Mammary epithelial cell (primary cell): ENCODE measurements at regions of chr5 and their contacts with region 1.

Region 1: GRCh38 chr5:74640450-74640953 is at the start of gene ENC1:
- DNase-seq: peak; percentile 88
- H3K4me3 ChIP-seq: peak within 1 kb of the TSS; percentile 66 to 98 (median 93)
- H3K27ac ChIP-seq: peak within 1 kb of the TSS; percentile 91
- H3K4me1 ChIP-seq: peaks cover 60% of the 10 kb centered on the region
- H3K27me3 ChIP-seq: no peaks in the 10 kb centered on the region
- CTCF ChIP-seq: peak; percentile 12 to 59
- total RNA-seq, gene ENC1: 42.4 to 392 TPM

Region 2: DNA sequence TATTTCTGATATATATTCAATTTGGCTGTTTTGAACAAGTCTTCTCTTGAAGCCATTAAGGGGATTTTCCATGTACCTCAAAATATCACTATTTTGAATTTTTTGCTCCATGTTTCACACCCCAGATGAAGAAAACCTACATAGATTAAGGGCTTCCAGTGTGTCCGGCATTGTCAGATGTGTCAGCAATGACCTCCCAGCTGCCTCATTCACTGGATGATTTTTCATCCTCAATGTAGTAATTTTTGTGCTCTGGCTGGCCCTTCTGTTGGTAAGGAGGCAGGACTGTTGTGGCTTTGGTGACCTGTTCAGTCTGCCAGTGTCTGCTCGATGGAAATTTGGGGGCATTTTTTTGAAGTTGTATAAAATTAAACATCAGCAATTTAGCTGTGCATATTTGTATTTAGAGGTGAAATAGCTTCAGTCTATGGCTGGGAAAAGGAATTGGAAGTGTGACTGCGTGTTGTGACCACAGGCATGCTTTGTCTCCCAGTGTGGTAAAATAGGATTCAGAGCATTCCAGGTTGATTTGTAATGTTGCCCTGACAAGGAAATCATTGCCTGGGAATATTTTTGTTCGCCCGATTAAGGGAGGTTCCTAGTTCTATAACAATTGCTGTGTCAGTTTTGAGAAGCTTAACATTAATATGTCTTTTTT is 702.1 kb before region 1 on chr5:
- CTCF ChIA-PET with region 1: no interaction called
- dilution Hi-C with region 1: no loop called
- in situ Hi-C with region 1: no loop called
- intact Hi-C with region 1: loop called (anchors 1 kb)
- DNase-seq: peak; percentile 89
- H3K4me3 ChIP-seq: peak overlapping the region in 2 of 3 experiments; percentile 2 to 6
- H3K27ac ChIP-seq: peak overlapping the region; percentile 90
- H3K4me1 ChIP-seq: peaks cover 42% of the 10 kb centered on the region
- H3K27me3 ChIP-seq: no peaks in the 10 kb centered on the region
- CTCF ChIP-seq: no peak

Region 3: DNA sequence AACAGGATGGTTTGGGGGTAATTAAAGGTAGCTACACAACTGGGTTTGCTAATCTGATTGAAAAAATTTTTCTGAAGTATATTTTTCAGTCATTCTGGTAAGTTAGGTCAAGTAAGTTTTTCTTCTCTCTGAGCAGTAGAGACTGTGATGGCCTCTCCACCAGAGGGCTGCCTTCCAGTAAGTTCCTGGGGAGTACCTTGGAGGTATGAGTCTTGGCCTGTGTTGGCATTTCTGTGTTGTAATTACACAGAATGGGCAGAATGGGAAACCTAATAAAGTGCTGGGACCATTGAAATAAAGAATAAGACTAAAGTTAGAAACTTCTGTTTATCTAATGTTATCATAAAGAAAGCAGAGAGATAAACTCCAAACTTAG is 583.7 kb before region 1 on chr5:
- CTCF ChIA-PET with region 1: no interaction called
- dilution Hi-C with region 1: no loop called
- in situ Hi-C with region 1: no loop called
- intact Hi-C with region 1: loop called (anchors 1 kb)
- DNase-seq: peak; percentile 47
- H3K4me3 ChIP-seq: no peak overlapping the region
- H3K27ac ChIP-seq: no peak overlapping the region
- H3K4me1 ChIP-seq: peaks cover 6% of the 10 kb centered on the region
- H3K27me3 ChIP-seq: no peaks in the 10 kb centered on the region
- CTCF ChIP-seq: peak; percentile 49 to 83

Region 4: GRCh38 chr5:74232281-74232680 is 408.2 kb before region 1 on chr5:
- CTCF ChIA-PET with region 1: no interaction called
- dilution Hi-C with region 1: no loop called
- in situ Hi-C with region 1: loop called in 1 of 2 experiments (anchors 25 kb)
- intact Hi-C with region 1: no loop called
- DNase-seq: peak; percentile 99
- H3K4me3 ChIP-seq: no peak overlapping the region
- H3K27ac ChIP-seq: peak overlapping the region; percentile 86
- H3K4me1 ChIP-seq: peaks cover 33% of the 10 kb centered on the region
- H3K27me3 ChIP-seq: no peaks in the 10 kb centered on the region
- CTCF ChIP-seq: no peak

Region 5: GRCh38 chr5:74316064-74316679 is 324.3 kb before region 1 on chr5:
- CTCF ChIA-PET with region 1: interaction called, 5 read pairs
- dilution Hi-C with region 1: no loop called
- in situ Hi-C with region 1: loop called in 1 of 2 experiments (anchors 10 kb)
- intact Hi-C with region 1: loop called (anchors 1 kb)
- DNase-seq: peak; percentile 99
- H3K4me3 ChIP-seq: no peak overlapping the region
- H3K27ac ChIP-seq: peak overlapping the region; percentile 98
- H3K4me1 ChIP-seq: peaks cover 52% of the 10 kb centered on the region
- H3K27me3 ChIP-seq: no peaks in the 10 kb centered on the region
- CTCF ChIP-seq: no peak

Region 6: GRCh38 chr5:74576941-74577456 is 63.5 kb before region 1 on chr5:
- CTCF ChIA-PET with region 1: no interaction called
- dilution Hi-C with region 1: no loop called
- in situ Hi-C with region 1: no loop called
- intact Hi-C with region 1: loop called (anchors 2 kb)
- DNase-seq: peak; percentile 44
- H3K4me3 ChIP-seq: no peak overlapping the region
- H3K27ac ChIP-seq: peak overlapping the region; percentile 27
- H3K4me1 ChIP-seq: peaks cover 35% of the 10 kb centered on the region
- H3K27me3 ChIP-seq: no peaks in the 10 kb centered on the region
- CTCF ChIP-seq: no peak

Region 7: DNA sequence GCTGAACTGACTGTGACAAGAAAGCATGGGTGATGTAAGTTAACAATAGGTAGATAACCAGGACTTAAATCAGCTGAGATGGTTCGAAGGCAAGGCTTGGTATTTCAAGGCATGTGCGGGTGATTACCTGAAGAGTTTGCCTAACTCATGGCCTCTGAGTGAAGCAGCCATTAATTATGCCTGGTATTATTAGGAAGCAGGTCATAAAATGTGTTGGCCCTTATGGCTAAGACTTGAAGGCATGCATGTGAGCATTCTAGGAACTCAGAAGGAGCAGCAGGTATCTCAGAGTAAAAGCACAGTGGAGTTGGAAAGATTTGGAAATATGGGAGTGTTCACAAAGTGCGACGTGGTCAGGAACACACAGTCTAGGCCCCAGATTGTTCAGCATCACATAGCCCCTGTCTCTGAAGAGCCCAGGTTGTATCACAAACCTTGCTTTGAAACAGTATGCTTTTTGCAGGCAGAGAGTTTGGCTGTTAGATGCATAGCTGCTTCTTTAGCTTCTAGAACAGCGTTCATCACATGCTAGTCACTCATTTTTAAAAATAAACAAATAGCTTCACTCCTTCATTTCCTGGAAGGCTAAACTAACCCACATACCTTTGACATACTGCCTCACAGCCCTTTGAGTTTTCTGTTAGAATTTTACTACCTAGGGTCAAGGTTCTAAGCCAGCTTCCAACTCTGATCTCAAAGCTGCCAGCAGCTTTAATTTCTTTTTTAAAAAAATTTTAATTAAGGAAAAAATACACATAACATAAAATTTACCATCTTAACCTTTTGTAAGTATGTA is 46.7 kb after region 1 on chr5:
- CTCF ChIA-PET with region 1: no interaction called
- dilution Hi-C with region 1: no loop called
- in situ Hi-C with region 1: no loop called
- intact Hi-C with region 1: no loop called
- DNase-seq: no peak
- H3K4me3 ChIP-seq: no peak overlapping the region
- H3K27ac ChIP-seq: no peak overlapping the region
- H3K4me1 ChIP-seq: peaks cover 17% of the 10 kb centered on the region
- H3K27me3 ChIP-seq: no peaks in the 10 kb centered on the region
- CTCF ChIP-seq: no peak